Aorta (tissue), 5 donors: ENCODE measurements at regions of chr7 and their contacts with region 1.

Region 1: DNA sequence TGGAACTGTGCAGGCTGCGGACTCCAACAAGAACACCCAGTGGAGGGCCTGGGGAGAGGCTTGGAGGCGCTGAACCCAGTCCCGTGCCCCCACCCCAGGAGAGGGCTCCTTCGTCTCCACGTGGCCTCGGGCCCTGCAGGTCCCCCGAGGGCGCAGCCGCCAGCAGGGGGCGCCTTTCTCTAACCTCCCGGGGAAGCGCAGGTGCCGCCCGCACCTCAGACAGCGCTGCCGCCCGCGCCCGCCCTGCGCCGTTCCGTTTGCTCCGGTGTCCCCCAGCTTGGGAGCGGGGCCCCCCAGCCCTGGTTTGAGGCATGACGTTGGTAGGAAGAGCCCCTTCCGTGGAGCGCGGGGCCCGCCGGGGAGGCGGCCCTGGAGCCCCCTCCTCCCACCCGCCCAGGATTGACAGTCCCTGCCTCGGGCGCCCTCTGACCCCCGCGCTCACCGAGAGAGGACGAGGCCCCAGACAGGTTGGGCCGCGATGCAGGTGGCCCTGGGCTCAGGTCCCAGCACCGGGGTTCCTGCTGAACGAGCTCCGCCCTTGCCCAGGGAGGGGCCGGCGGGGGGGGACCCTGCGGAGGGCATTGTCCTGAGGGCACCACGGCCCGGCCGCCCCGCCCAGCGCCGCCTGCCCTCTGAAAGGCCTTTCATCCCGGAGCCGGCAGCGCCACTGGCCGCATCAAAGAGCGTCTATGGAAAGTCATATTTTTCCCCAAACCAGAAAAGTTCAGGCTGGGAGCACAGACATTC is 42.8 kb downstream of the FOXL3 start:
- DNase-seq: peak; percentile 88 to 95
- ATAC-seq: peak; percentile 84
- H3K4me3 ChIP-seq: peak overlapping the region; percentile 4 to 27
- H3K27ac ChIP-seq: no peak overlapping the region
- H3K4me1 ChIP-seq: no peaks in the 10 kb centered on the region
- H3K27me3 ChIP-seq: no peaks in the 10 kb centered on the region

Region 2: GRCh38 chr7:162632-163297 is 170.1 kb before region 1 on chr7:
- intact Hi-C with region 1: no loop called
- DNase-seq: peak; percentile 40 to 70
- ATAC-seq: no peak
- H3K4me3 ChIP-seq: no peak overlapping the region
- H3K27ac ChIP-seq: no peak overlapping the region
- H3K4me1 ChIP-seq: no peaks in the 10 kb centered on the region
- H3K27me3 ChIP-seq: no peaks in the 10 kb centered on the region

Region 3: DNA sequence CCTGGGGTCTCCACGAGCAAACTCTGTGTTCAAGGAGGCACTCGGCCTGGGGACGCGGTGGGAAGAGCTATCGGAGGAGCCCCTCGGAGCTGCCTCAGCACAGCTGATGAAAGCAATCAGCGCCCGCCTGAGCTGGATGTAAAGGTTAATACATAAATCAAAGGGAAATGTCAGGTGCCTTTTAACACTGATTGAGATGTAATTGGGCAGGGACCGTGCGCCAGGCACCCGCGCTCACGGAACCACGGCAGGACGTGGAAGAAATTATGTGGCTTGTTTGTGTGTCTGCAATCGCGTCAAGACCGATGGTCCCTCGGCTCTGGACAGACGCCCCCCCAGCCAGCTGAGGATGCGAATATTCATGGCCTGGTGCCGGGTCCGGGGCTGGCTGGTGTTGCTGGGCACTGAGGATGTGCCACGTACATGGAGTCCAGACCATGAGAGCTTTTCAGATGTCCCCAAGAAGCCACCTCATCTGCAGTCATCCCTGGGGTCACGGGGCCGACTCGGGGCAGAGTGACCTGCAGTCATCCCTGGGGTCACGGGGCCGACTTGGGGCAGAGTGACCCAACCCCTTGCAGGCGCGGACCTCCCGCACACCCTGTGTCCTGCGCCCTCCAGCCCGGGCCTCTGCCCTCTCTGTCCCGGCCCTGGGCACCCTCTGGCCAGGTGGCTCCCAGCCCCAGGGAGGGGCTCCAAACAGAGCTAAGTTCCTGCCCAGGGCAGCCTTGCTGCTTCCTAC is 27.2 kb before region 1 on chr7:
- intact Hi-C with region 1: no loop called
- DNase-seq: peak in 1 of 2 donors; percentile 56
- ATAC-seq: no peak
- H3K4me3 ChIP-seq: no peak overlapping the region
- H3K27ac ChIP-seq: no peak overlapping the region
- H3K4me1 ChIP-seq: no peaks in the 10 kb centered on the region
- H3K27me3 ChIP-seq: no peaks in the 10 kb centered on the region

Region 4: DNA sequence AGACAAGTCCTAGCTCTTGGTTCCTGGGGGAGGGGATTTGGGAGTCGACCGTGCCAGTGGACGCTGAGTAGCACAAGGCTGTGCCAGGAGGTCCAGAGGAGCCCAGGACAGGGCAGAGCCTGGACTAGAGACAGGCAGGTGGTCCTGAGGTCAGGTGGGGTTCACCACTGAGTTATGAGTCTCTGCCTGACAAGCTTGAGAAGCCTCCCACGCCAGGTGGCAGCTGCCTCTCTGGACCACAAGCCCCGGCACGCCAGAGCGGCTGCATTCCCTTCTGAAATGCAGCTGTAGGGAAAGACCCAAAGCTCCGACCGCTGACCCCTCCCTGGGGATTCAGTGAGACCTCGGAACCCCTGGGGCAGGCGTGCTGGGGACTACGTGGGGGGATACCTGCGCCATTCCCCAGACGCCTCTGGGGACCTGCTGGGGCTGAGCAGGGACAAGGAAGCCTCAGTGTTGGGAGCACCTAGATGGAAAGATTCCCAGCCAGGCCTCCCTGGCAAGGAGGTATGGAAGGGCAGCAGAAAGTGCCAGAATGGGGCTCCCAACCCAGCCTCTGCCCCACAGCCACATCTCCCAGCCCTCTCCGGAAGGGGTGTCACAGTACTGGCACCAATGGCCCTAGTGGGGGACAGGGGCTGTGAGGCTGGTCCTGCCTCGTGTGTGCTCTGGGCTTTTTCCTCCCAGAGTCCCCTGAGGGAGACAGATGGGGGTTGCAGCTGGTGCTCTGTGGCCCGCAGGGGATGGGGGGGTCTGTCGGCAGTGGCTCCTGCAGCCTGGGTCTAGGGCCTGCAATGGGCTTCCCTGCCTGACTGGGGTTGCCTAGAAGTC is 157.9 kb after region 1 on chr7:
- intact Hi-C with region 1: loop called in 1 of 2 experiments (anchors 10 kb)
- DNase-seq: peak; percentile 37 to 77
- ATAC-seq: no peak
- H3K4me3 ChIP-seq: no peak overlapping the region
- H3K27ac ChIP-seq: no peak overlapping the region
- H3K4me1 ChIP-seq: no peaks in the 10 kb centered on the region
- H3K27me3 ChIP-seq: no peaks in the 10 kb centered on the region

Region 5: GRCh38 chr7:516606-517456 is 184.0 kb after region 1 on chr7:
- intact Hi-C with region 1: loop called in 1 of 2 experiments (anchors 5 kb)
- DNase-seq: peak; percentile 76 to 89
- ATAC-seq: no peak
- H3K4me3 ChIP-seq: peak overlapping the region; percentile 89 to 95
- H3K27ac ChIP-seq: peak overlapping the region; percentile 78 to 90
- H3K4me1 ChIP-seq: peaks cover 0 to 3% of the 10 kb centered on the region in 2 donors
- H3K27me3 ChIP-seq: no peaks in the 10 kb centered on the region

Region 6: DNA sequence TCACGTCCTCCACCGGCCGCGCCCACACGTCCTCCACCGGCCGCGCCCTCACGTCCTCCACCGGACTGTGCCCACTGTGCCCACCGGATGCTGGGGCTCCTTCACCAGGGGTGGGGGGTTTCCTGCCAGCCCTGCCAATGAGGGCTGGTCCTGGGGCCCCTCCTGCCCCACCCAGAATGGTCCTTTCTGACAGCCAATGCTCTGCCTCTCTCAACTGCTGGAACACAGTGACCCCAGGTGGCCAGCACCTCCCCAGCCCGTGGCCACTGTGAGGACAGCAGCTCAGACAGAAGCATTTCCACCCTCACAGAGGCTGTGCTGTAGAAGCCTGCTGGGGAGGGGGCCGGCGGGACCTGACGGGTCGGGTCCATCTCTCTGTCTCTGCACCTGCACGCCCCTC is 303.6 kb after region 1 on chr7:
- intact Hi-C with region 1: loop called in 1 of 2 experiments (anchors 5 kb)
- DNase-seq: peak; percentile 76 to 84
- ATAC-seq: no peak
- H3K4me3 ChIP-seq: no peak overlapping the region
- H3K27ac ChIP-seq: no peak overlapping the region
- H3K4me1 ChIP-seq: no peaks in the 10 kb centered on the region
- H3K27me3 ChIP-seq: no peaks in the 10 kb centered on the region